Ovary (tissue), 10 donors: ENCODE measurements at regions of chr6 and their contacts with region 1.

Region 1: GRCh38 chr6:30926644-30927043 is 5.3 kb downstream of the SFTA2 start:
- DNase-seq: no peak
- H3K4me3 ChIP-seq: no peak overlapping the region
- H3K27ac ChIP-seq: no peak overlapping the region
- H3K4me1 ChIP-seq: no peaks in the 10 kb centered on the region
- H3K27me3 ChIP-seq: no peaks in the 10 kb centered on the region
- CTCF ChIP-seq: no peak
- EP300 ChIP-seq: no peak
- POLR2A ChIP-seq: no peak

Region 2: GRCh38 chr6:31068669-31069340 is 142.2 kb after region 1 on chr6:
- intact Hi-C with region 1: loop called in 1 of 4 experiments (anchors 10 kb)
- DNase-seq: peak; percentile 52 to 72 (median 65)
- H3K4me3 ChIP-seq: no peak overlapping the region
- H3K27ac ChIP-seq: no peak overlapping the region
- H3K4me1 ChIP-seq: no peaks in the 10 kb centered on the region
- H3K27me3 ChIP-seq: no peaks in the 10 kb centered on the region
- CTCF ChIP-seq: peak; percentile 15 to 52 (median 41)
- EP300 ChIP-seq: no peak
- POLR2A ChIP-seq: no peak